CD4-positive, alpha-beta T cell (primary cell): ENCODE measurements at regions of chr7 and their contacts with region 1.

Region 1: DNA sequence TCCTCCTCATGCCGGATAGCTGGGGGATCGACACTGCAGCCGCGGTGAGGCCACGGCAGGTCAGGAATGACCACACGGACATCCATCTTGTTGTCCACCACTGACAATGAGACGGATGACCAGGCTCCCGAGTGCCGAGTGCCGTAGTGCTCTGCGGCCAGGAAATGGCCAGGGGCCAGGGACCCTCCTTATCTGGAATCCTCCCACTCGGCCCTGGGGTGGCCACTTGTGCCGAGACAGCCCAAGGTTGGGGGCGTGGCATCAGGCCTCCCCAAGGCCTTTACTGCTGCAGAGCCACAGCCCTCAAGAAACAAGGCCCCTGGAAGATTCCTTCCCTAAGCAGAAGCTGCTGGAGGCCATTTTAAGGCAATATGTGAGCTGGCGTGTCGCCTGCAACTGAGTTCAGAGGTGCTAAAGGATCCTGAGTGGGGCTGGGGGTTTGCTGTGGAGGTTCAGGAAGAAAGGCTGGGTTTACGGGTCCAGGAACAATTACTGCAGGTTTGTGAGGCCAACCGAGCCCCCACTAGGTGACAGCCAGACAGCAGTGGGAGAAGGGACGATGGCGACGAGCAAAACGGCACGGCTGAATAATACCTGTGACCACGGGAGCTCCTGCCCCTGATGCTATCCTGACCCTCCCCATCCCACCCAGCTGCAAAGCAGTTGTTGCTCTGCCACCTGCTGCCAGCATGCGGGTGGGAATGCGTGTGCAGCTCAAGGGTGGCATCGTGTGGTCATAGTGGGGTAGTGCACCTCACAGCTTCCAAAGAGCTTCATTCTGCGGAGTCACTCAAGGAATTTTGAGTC is 31.6 kb upstream of the LEP start:
- DNase-seq: peak; percentile 53 to 87 (median 61)
- ATAC-seq: peak; percentile 96
- H3K4me3 ChIP-seq: no peak overlapping the region
- H3K4me3 Mint-ChIP-seq: no peak overlapping the region
- H3K27ac ChIP-seq: no peak overlapping the region
- H3K27ac Mint-ChIP-seq: no peak overlapping the region
- H3K4me1 ChIP-seq: peaks cover 4% of the 10 kb centered on the region
- H3K4me1 Mint-ChIP-seq: no peaks in the 10 kb centered on the region
- H3K27me3 ChIP-seq: peaks cover 3 to 5% of the 10 kb centered on the region in 2 experiments
- H3K27me3 Mint-ChIP-seq: peaks cover 15% of the 10 kb centered on the region
- CTCF ChIP-seq: peak; percentile 97

Region 2: GRCh38 chr7:126790763-126791162 is 1418.7 kb before region 1 on chr7:
- CTCF ChIA-PET with region 1: no interaction called
- POLR2A ChIA-PET with region 1: no interaction called
- intact Hi-C with region 1: loop called in 1 of 2 experiments (anchors 10 kb)
- DNase-seq: no peak
- ATAC-seq: no peak
- H3K4me3 ChIP-seq: no peak overlapping the region
- H3K4me3 Mint-ChIP-seq: no peak overlapping the region
- H3K27ac ChIP-seq: no peak overlapping the region
- H3K27ac Mint-ChIP-seq: no peak overlapping the region
- H3K4me1 ChIP-seq: no peaks in the 10 kb centered on the region
- H3K4me1 Mint-ChIP-seq: no peaks in the 10 kb centered on the region
- H3K27me3 ChIP-seq: no peaks in the 10 kb centered on the region
- H3K27me3 Mint-ChIP-seq: peaks cover 22% of the 10 kb centered on the region
- CTCF ChIP-seq: no peak

Region 3: DNA sequence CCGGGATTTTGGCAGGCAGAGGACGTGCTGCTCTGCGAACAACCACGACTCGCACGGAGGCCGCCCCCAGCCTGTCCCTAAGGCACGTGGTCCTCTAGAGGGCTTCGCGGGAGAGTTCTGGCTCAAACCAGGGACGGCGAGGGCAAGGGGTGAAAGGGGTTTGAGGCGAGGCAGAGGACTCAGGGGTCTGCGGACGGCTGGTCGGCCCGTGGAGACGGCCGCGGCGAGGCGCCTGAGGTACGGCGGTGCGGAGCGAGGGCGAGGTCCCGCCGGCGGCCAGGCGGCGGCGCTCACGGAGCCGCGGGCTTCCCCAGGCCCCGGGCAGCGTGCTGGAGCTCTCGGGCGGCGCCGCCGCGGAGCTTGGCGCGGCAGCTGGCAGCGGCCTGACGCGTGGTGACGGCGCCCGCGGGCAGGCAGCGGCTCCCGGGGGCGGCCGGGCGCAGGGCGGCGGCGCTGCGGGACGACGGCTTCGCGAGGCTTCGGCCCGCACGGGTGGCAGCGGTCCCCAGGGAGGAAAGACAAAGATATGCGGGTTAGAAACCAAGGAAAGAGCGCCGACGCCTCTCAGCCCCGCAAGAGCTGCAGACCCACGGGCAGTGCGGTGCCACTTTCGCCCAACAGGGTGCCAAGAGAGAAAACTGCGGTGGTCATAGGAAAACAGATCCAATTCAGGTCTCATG is 861.7 kb before region 1 on chr7:
- CTCF ChIA-PET with region 1: no interaction called
- POLR2A ChIA-PET with region 1: no interaction called
- intact Hi-C with region 1: loop called in 1 of 2 experiments (anchors 2 kb)
- DNase-seq: peak; percentile 48 to 90 (median 68)
- ATAC-seq: peak; percentile 99
- H3K4me3 ChIP-seq: peak overlapping the region; percentile 38
- H3K4me3 Mint-ChIP-seq: peak overlapping the region; percentile 36
- H3K27ac ChIP-seq: no peak overlapping the region
- H3K27ac Mint-ChIP-seq: no peak overlapping the region
- H3K4me1 ChIP-seq: peaks cover 7% of the 10 kb centered on the region
- H3K4me1 Mint-ChIP-seq: peaks cover 36% of the 10 kb centered on the region
- H3K27me3 ChIP-seq: no peaks in the 10 kb centered on the region
- H3K27me3 Mint-ChIP-seq: no peaks in the 10 kb centered on the region
- CTCF ChIP-seq: peak; percentile 42

Region 4: DNA sequence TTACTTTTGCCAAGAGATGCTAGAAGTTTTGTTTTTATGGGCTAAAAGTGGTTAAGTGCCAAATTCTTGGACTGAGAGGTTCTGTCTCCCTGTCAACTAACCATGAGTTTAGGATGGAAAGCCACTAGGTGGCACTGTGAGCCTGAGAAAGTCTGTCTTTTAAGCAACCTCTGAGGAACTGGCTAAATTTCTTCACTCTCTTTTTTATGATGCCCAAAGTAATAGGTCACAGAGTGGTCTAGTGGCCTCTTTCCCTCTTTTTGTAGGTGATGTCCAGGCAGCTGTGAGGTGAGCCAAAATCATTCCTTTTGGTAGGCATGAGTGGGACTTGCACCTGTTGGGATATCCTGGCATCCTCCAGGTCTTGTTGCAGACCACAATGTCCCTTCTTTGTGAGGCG is 500.6 kb before region 1 on chr7:
- CTCF ChIA-PET with region 1: interaction called, 44 read pairs
- POLR2A ChIA-PET with region 1: interaction called, 7 read pairs
- intact Hi-C with region 1: loop called (anchors 1 kb)
- DNase-seq: peak; percentile 40 to 83 (median 62)
- ATAC-seq: peak; percentile 62
- H3K4me3 ChIP-seq: no peak overlapping the region
- H3K4me3 Mint-ChIP-seq: no peak overlapping the region
- H3K27ac ChIP-seq: no peak overlapping the region
- H3K27ac Mint-ChIP-seq: peak overlapping the region; percentile 13
- H3K4me1 ChIP-seq: no peaks in the 10 kb centered on the region
- H3K4me1 Mint-ChIP-seq: no peaks in the 10 kb centered on the region
- H3K27me3 ChIP-seq: no peaks in the 10 kb centered on the region
- H3K27me3 Mint-ChIP-seq: no peaks in the 10 kb centered on the region
- CTCF ChIP-seq: peak; percentile 86

Region 5: DNA sequence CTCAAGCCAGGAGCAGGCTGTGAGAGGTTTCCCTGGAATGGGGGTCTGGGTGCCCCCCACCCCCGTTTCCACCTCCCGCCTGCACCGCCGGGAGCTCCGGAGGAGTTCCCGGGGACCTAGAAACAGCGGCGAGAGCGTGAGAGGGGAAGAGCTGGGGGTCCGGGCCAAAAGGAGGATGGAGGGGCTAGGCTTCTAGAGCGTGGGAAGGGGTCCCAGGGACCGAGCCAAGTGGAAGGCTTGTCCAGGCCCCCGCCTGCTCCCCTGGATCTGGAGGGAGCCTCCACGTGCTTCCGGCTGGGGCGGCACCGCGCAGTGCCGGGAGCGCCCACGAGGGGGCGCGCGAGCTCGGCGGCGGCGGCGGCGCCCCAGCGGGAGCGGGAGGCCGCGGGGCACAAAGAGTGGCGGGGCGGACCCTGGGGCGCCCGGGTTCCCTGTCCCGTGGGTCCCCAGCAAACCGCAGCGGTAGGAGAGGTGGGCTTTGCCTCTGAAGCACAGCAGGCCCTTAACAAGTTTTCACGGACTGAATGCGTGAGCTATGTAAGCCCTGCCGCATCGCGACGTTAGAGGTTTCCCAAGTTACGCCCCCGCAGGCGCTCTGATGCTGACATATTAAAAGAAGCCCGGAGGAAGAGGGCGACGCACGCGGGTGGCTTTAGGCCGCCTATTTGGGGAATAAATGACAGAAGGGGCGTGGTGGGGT is 73.8 kb before region 1 on chr7:
- CTCF ChIA-PET with region 1: interaction called, 21 read pairs
- POLR2A ChIA-PET with region 1: interaction called, 5 read pairs
- intact Hi-C with region 1: loop called (anchors 2 kb)
- DNase-seq: peak; percentile 26 to 79 (median 50)
- ATAC-seq: peak; percentile 93
- H3K4me3 ChIP-seq: peak overlapping the region; percentile 64
- H3K4me3 Mint-ChIP-seq: peak overlapping the region; percentile 83
- H3K27ac ChIP-seq: no peak overlapping the region
- H3K27ac Mint-ChIP-seq: no peak overlapping the region
- H3K4me1 ChIP-seq: peaks cover 22% of the 10 kb centered on the region
- H3K4me1 Mint-ChIP-seq: peaks cover 18% of the 10 kb centered on the region
- H3K27me3 ChIP-seq: peaks cover 17 to 21% of the 10 kb centered on the region in 2 experiments
- H3K27me3 Mint-ChIP-seq: peaks cover 32% of the 10 kb centered on the region
- CTCF ChIP-seq: peak; percentile 56